Posterior vena cava (tissue), 2 donors: ENCODE measurements at regions of chr1 and their contacts with region 1.

Region 1: DNA sequence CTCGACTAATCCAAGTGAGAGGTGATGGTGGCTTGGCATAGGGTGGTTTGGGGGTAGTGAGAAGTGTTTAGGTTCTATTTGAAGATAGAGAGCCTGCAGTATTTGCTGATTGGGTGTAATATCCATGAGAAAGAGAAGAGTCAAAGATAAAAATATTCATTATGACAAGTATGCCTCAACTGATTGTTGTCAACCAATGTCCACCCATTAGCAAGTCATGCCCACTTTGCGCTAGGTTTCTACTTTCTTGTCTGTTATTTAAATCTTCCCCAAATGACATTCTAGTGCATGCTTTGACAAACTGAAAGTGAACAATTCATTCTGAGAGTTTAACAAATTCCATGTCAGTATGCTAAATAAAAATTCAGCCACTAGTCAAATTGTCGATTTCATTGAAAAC is 3.8 kb upstream of the XCL1 start:
- DNase-seq: no peak

Region 2: DNA sequence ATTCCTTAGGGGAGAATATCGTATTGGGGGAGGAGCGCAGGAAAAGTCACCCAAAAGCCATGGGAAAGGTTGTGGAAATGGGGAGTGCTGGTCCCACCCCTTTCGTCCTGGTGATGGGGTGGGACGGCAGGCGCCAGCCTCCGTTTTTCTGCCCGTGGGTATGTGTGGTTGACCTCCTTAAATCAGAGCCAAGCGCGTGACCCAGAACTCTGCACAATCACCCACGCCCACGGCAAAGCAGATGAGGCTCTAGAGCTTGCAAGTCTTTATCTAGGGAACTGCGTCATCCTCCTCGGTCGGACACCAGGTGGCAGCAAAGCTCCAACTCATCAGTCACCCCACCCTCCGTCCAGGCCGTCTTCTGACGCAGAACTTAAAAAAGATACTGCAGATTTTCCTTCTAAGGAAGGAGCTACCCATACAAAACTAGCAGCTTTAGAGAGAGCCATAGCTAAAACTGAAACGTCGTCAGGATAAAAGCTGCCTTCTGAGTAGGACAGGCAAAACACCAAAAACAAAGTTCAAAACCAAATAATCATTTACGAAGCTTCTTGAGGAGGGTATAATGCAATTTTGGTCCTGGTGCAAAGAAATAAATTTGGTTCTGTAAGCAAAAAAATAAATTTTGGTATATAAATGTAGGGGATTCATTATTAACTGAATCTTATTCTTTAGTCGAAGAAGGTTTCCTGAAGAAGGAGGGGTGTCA is 229.9 kb before region 1 on chr1:
- intact Hi-C with region 1: loop called in 1 of 2 experiments (anchors 10 kb)
- DNase-seq: peak; percentile 97

Region 3: GRCh38 chr1:168439456-168440375 is 132.9 kb before region 1 on chr1:
- intact Hi-C with region 1: loop called in 1 of 2 experiments (anchors 2 kb)
- DNase-seq: no peak

Region 4: DNA sequence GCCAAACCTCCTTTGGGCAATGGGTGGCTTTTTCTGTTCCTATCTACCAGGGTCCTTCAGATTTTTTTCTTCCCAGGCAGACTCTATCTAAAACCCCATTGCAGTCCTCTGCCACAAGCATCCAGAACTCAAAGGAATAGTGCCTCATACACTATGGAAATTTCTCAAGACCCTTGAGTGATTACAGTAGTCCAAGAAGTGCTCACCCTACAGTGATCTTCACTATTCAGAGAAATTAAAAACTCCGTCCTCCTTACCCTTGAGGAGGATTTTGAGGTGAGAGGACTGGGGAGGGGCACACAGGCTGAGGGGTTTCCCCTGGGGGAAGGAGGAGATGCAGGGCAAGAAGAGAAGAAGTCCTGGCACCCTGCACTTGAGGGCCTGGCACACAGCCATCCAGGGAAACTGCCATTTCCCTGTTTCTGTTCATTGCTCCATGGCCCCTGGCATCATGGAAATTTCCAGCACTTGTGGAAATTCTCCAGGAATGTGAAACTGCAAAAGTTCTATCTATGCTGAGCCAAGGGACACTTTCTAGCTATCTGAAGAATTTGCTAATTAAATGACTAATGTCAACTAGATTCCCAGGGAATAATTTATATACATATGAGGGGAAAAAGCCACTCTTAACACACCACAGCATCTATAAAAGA is 431.4 kb after region 1 on chr1:
- intact Hi-C with region 1: no loop called
- DNase-seq: peak; percentile 80